ENCODE measurements at regions of chr6 and their contacts with region 1.

Region 1: GRCh38 chr6:159789377-159790148 is at the start of gene TCP1:
- DNase-seq: peak; percentile 99
- ATAC-seq: peak; percentile 78
- H3K4me3 ChIP-seq: peak within 1 kb of the TSS; percentile 70 to 98 (median 93)
- H3K4me3 Mint-ChIP-seq: peak within 1 kb of the TSS; percentile 100
- H3K27ac ChIP-seq: peak within 1 kb of the TSS; percentile 70 to 96
- H3K27ac Mint-ChIP-seq: peak within 1 kb of the TSS; percentile 95
- H3K4me1 ChIP-seq: peaks cover 30 to 32% of the 10 kb centered on the region in 2 donors
- H3K4me1 Mint-ChIP-seq: peaks cover 51% of the 10 kb centered on the region
- H3K27me3 ChIP-seq: no peaks in the 10 kb centered on the region
- H3K27me3 Mint-ChIP-seq: no peaks in the 10 kb centered on the region
- CTCF ChIP-seq: no peak
- total RNA-seq, gene TCP1: 137 and 150 TPM in 2 replicates

Region 2: GRCh38 chr6:159620947-159621346 is 168.6 kb before region 1 on chr6:
- CTCF ChIA-PET with region 1: no interaction called
- POLR2A ChIA-PET with region 1: no interaction called
- intact Hi-C with region 1: no loop called
- DNase-seq: no peak
- ATAC-seq: no peak
- H3K4me3 ChIP-seq: no peak overlapping the region
- H3K4me3 Mint-ChIP-seq: no peak overlapping the region
- H3K27ac ChIP-seq: no peak overlapping the region
- H3K27ac Mint-ChIP-seq: no peak overlapping the region
- H3K4me1 ChIP-seq: no peaks in the 10 kb centered on the region
- H3K4me1 Mint-ChIP-seq: no peaks in the 10 kb centered on the region
- H3K27me3 ChIP-seq: no peaks in the 10 kb centered on the region
- H3K27me3 Mint-ChIP-seq: peaks cover 8% of the 10 kb centered on the region
- CTCF ChIP-seq: peak; percentile 11

Region 3: GRCh38 chr6:159761873-159762680 is 27.5 kb before region 1 on chr6 and contains the start of gene ACAT2:
- CTCF ChIA-PET with region 1: interaction called, 4 read pairs
- POLR2A ChIA-PET with region 1: interaction called, 28 read pairs
- intact Hi-C with region 1: loop called (anchors 1 kb)
- DNase-seq: peak; percentile 94
- ATAC-seq: peak; percentile 96
- H3K4me3 ChIP-seq: peak within 1 kb of the TSS; percentile 83 to 99 (median 93)
- H3K4me3 Mint-ChIP-seq: peak within 1 kb of the TSS; percentile 95
- H3K27ac ChIP-seq: peak within 1 kb of the TSS; percentile 95 to 96
- H3K27ac Mint-ChIP-seq: peak within 1 kb of the TSS; percentile 96
- H3K4me1 ChIP-seq: peaks cover 17 to 19% of the 10 kb centered on the region in 2 donors
- H3K4me1 Mint-ChIP-seq: peaks cover 21% of the 10 kb centered on the region
- H3K27me3 ChIP-seq: no peaks in the 10 kb centered on the region
- H3K27me3 Mint-ChIP-seq: no peaks in the 10 kb centered on the region
- CTCF ChIP-seq: no peak
- total RNA-seq, gene ACAT2: 31.1 and 32.6 TPM in 2 replicates

Region 4: GRCh38 chr6:159973951-159974350 is 184.4 kb after region 1 on chr6:
- CTCF ChIA-PET with region 1: no interaction called
- POLR2A ChIA-PET with region 1: no interaction called
- intact Hi-C with region 1: loop called (anchors 2 kb)
- DNase-seq: no peak
- ATAC-seq: no peak
- H3K4me3 ChIP-seq: no peak overlapping the region
- H3K4me3 Mint-ChIP-seq: no peak overlapping the region
- H3K27ac ChIP-seq: no peak overlapping the region
- H3K27ac Mint-ChIP-seq: no peak overlapping the region
- H3K4me1 ChIP-seq: peaks cover 27 to 43% of the 10 kb centered on the region in 2 donors
- H3K4me1 Mint-ChIP-seq: peaks cover 69% of the 10 kb centered on the region
- H3K27me3 ChIP-seq: no peaks in the 10 kb centered on the region
- H3K27me3 Mint-ChIP-seq: no peaks in the 10 kb centered on the region
- CTCF ChIP-seq: no peak